ENCODE measurements at regions of chr3 and their contacts with region 1.

Region 1: GRCh38 chr3:107421170-107421792 is 44.0 kb downstream of the CCDC54 start:
- DNase-seq: peak; percentile 81
- H3K4me3 Mint-ChIP-seq: peak overlapping the region; percentile 63
- H3K27ac Mint-ChIP-seq: peak overlapping the region; percentile 75
- H3K4me1 Mint-ChIP-seq: peaks cover 18% of the 10 kb centered on the region
- H3K27me3 Mint-ChIP-seq: no peaks in the 10 kb centered on the region
- CTCF ChIP-seq: peak; percentile 62

Region 2: GRCh38 chr3:107284612-107285011 is 136.7 kb before region 1 on chr3:
- CTCF ChIA-PET with region 1: interaction called, 25 read pairs
- POLR2A ChIA-PET with region 1: interaction called, 3 read pairs
- intact Hi-C with region 1: no loop called
- DNase-seq: peak; percentile 39
- H3K4me3 Mint-ChIP-seq: no peak overlapping the region
- H3K27ac Mint-ChIP-seq: peak overlapping the region; percentile 96
- H3K4me1 Mint-ChIP-seq: peaks cover 22% of the 10 kb centered on the region
- H3K27me3 Mint-ChIP-seq: no peaks in the 10 kb centered on the region
- CTCF ChIP-seq: no peak

Region 3: GRCh38 chr3:107315141-107315540 is 106.1 kb before region 1 on chr3:
- CTCF ChIA-PET with region 1: interaction called, 10 read pairs
- POLR2A ChIA-PET with region 1: no interaction called
- intact Hi-C with region 1: no loop called
- DNase-seq: peak; percentile 39
- H3K4me3 Mint-ChIP-seq: no peak overlapping the region
- H3K27ac Mint-ChIP-seq: no peak overlapping the region
- H3K4me1 Mint-ChIP-seq: no peaks in the 10 kb centered on the region
- H3K27me3 Mint-ChIP-seq: no peaks in the 10 kb centered on the region
- CTCF ChIP-seq: no peak

Region 4: GRCh38 chr3:107392549-107393165 is 28.6 kb before region 1 on chr3:
- CTCF ChIA-PET with region 1: interaction called, 10 read pairs
- POLR2A ChIA-PET with region 1: interaction called, 12 read pairs
- intact Hi-C with region 1: no loop called
- DNase-seq: peak; percentile 68
- H3K4me3 Mint-ChIP-seq: no peak overlapping the region
- H3K27ac Mint-ChIP-seq: no peak overlapping the region
- H3K4me1 Mint-ChIP-seq: no peaks in the 10 kb centered on the region
- H3K27me3 Mint-ChIP-seq: no peaks in the 10 kb centered on the region
- CTCF ChIP-seq: no peak

Region 5: DNA sequence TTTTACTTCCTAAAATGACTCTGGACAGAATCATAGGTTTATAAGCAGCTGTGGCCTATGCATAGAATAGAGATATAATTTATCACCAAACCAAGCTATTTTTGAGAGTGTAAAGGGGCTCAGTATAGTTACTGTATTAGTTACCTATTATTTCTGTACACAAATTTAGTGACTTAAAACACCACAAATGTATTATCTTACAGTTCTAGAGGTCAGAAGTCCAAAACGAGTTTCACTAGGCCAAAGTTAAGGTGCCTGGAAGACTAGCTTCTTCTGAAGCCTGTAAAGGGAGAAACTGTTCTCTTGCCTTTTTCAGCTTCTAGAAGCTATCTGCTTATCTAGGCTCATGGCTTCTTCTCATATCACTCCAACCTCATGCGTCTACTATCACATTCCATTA is 13.9 kb before region 1 on chr3:
- CTCF ChIA-PET with region 1: interaction called, 11 read pairs
- POLR2A ChIA-PET with region 1: interaction called, 5 read pairs
- intact Hi-C with region 1: no loop called
- DNase-seq: no peak
- H3K4me3 Mint-ChIP-seq: no peak overlapping the region
- H3K27ac Mint-ChIP-seq: no peak overlapping the region
- H3K4me1 Mint-ChIP-seq: peaks cover 10% of the 10 kb centered on the region
- H3K27me3 Mint-ChIP-seq: no peaks in the 10 kb centered on the region
- CTCF ChIP-seq: no peak

Measured in MCF 10A (cell line).